Calu3 (cell line): ENCODE measurements at regions of chr19 and their contacts with region 1.

Region 1: GRCh38 chr19:16247353-16248182 is 49.9 kb downstream of the AP1M1 start:
- DNase-seq: peak; percentile 88
- H3K4me3 Mint-ChIP-seq: no peak overlapping the region
- H3K27ac Mint-ChIP-seq: no peak overlapping the region
- H3K4me1 Mint-ChIP-seq: no peaks in the 10 kb centered on the region
- H3K27me3 Mint-ChIP-seq: peaks cover 13% of the 10 kb centered on the region
- CTCF ChIP-seq: peak; percentile 88

Region 2: DNA sequence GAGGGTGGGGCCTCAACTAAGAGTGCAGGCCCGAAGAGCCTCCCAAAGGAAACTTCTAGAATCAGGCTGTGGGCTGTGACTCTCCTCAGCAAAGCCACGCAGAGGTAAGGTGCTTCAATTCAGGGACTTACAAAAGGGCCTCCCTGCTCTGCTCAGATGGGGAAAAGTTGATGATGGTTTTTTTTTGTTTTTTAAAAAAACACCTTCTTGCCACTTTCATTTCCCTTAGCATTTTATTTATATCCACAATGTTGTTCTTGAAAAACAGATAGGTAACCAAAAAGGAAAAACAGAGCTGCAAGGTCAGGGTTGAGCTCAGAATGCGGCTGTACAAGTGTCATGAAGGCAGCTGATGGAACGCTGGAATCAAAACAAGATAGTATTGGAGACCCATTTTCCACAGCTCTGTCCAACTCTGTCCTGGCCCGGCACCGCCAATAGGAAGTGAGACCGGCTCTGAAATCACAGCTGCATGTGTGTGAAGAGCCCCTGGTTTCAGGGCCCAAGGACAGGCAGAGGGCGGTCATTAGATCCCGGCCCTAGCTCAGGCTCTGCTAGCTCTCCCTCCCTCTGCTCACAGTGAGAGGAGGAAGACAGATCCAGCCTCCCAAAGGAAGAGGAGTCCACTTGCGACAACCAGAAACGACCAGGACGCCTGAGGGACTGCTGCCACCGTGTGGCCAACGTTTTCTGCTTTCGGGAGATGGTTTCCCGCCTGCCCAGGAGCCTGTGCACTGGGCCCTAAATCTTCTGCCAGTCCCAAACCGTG is 135.4 kb after region 1 on chr19:
- CTCF ChIA-PET with region 1: interaction called, 10 read pairs
- intact Hi-C with region 1: loop called (anchors 2 kb)
- DNase-seq: peak; percentile 63
- H3K4me3 Mint-ChIP-seq: no peak overlapping the region
- H3K27ac Mint-ChIP-seq: no peak overlapping the region
- H3K4me1 Mint-ChIP-seq: no peaks in the 10 kb centered on the region
- H3K27me3 Mint-ChIP-seq: no peaks in the 10 kb centered on the region
- CTCF ChIP-seq: peak; percentile 39